ENCODE measurements at regions of chr12 and their contacts with region 1.

Region 1: GRCh38 chr12:91811481-91812287 is 334.0 kb downstream of the BTG1 start:
- DNase-seq: peak in 1 of 2 donors; percentile 85
- H3K4me3 ChIP-seq: no peak overlapping the region
- H3K27ac ChIP-seq: no peak overlapping the region
- H3K4me1 ChIP-seq: no peaks in the 10 kb centered on the region
- H3K27me3 ChIP-seq: no peaks in the 10 kb centered on the region
- CTCF ChIP-seq: peak; percentile 60 to 81 (median 63)

Region 2: DNA sequence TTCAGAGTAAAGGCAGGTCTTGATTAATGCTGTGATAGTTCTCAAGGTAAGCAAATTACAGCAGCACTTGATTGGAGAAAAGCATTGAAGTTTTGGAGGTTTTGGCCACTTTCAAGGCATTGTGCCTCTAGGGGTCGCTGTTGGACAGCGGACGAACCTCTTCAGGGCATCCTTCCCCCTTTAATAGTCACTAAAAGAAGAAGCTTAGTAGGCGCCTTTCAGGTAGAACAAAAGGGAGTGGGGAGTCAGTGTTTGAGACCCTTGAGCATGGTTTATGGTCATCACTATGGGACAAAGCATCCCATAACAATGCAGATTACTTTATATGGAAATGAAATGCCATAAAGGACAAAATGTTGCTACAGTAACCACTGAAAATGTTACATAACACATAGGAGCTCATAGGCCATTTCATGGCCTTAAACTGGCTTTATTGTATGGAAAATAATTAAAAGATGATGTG is 429.6 kb before region 1 on chr12:
- intact Hi-C with region 1: loop called (anchors 5 kb)
- DNase-seq: peak in 1 of 2 donors; percentile 92
- H3K4me3 ChIP-seq: peak overlapping the region; percentile 55 to 61
- H3K27ac ChIP-seq: peak overlapping the region in 1 of 2 donors; percentile 1
- H3K4me1 ChIP-seq: no peaks in the 10 kb centered on the region
- H3K27me3 ChIP-seq: no peaks in the 10 kb centered on the region
- CTCF ChIP-seq: peak; percentile 75 to 89 (median 84)

Region 3: GRCh38 chr12:91732086-91732485 is 79.6 kb before region 1 on chr12:
- intact Hi-C with region 1: no loop called
- DNase-seq: no peak
- H3K4me3 ChIP-seq: no peak overlapping the region
- H3K27ac ChIP-seq: no peak overlapping the region
- H3K4me1 ChIP-seq: no peaks in the 10 kb centered on the region
- H3K27me3 ChIP-seq: no peaks in the 10 kb centered on the region
- CTCF ChIP-seq: no peak

Region 4: GRCh38 chr12:91753649-91754048 is 58.0 kb before region 1 on chr12:
- intact Hi-C with region 1: no loop called
- DNase-seq: no peak
- H3K4me3 ChIP-seq: no peak overlapping the region
- H3K27ac ChIP-seq: no peak overlapping the region
- H3K4me1 ChIP-seq: no peaks in the 10 kb centered on the region
- H3K27me3 ChIP-seq: no peaks in the 10 kb centered on the region
- CTCF ChIP-seq: no peak

Region 5: GRCh38 chr12:91781114-91781513 is 30.6 kb before region 1 on chr12:
- intact Hi-C with region 1: no loop called
- DNase-seq: no peak
- H3K4me3 ChIP-seq: no peak overlapping the region
- H3K27ac ChIP-seq: no peak overlapping the region
- H3K4me1 ChIP-seq: no peaks in the 10 kb centered on the region
- H3K27me3 ChIP-seq: no peaks in the 10 kb centered on the region
- CTCF ChIP-seq: no peak